Mammary epithelial cell (primary cell): ENCODE measurements at regions of chr14 and their contacts with region 1.

Region 1: DNA sequence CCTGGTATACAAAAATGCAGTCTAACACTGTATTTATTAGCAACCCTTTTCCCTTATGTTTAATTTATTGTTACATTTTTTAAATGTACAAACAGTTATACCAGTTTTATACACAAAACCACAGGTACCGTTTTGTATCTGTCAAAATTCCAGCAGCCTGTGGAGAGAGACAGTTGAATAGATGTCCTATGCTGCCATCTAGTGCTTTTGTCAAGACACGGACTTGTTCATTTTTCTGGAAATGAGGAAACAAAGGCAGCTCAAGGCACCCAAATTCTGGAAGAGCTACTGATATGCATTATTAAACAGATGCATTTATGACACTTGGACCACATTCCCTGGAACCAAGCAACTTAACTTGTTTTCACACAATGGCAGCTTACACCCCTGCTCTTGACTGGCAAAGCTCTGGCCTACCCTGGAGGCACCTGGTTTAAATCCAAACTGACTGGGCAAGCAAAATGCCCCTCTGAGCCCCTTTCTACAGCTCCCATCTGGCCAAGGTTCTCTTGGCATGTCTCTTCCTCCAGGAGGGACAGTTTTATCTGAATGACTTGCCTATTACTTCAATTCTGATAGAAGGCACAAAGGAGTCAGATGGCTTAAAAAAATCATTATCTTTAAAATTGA is 286.9 kb upstream of the PRKD1 start:
- DNase-seq: peak; percentile 55
- H3K4me3 ChIP-seq: no peak overlapping the region
- H3K27ac ChIP-seq: no peak overlapping the region
- H3K4me1 ChIP-seq: peaks cover 5% of the 10 kb centered on the region
- H3K27me3 ChIP-seq: no peaks in the 10 kb centered on the region
- CTCF ChIP-seq: peak; percentile 68 to 70

Region 2: GRCh38 chr14:29927376-29928116 is 287.0 kb before region 1 on chr14 and contains the start of gene PRKD1:
- CTCF ChIA-PET with region 1: no interaction called
- dilution Hi-C with region 1: no loop called
- in situ Hi-C with region 1: no loop called
- intact Hi-C with region 1: loop called (anchors 2 kb)
- DNase-seq: peak; percentile 37
- H3K4me3 ChIP-seq: peak within 1 kb of the TSS; percentile 48 to 53 (median 48)
- H3K27ac ChIP-seq: no peak within 1 kb of the TSS
- H3K4me1 ChIP-seq: peaks cover 5% of the 10 kb centered on the region
- H3K27me3 ChIP-seq: no peaks in the 10 kb centered on the region
- CTCF ChIP-seq: no peak
- total RNA-seq, gene PRKD1: 1.4 to 6.3 TPM

Region 3: GRCh38 chr14:30005114-30005808 is 209.3 kb before region 1 on chr14:
- CTCF ChIA-PET with region 1: no interaction called
- dilution Hi-C with region 1: no loop called
- in situ Hi-C with region 1: no loop called
- intact Hi-C with region 1: loop called (anchors 1 kb)
- DNase-seq: peak; percentile 21
- H3K4me3 ChIP-seq: no peak overlapping the region
- H3K27ac ChIP-seq: no peak overlapping the region
- H3K4me1 ChIP-seq: no peaks in the 10 kb centered on the region
- H3K27me3 ChIP-seq: no peaks in the 10 kb centered on the region
- CTCF ChIP-seq: peak; percentile 37 to 57

Region 4: GRCh38 chr14:30227876-30228275 is 13.3 kb after region 1 on chr14:
- CTCF ChIA-PET with region 1: no interaction called
- dilution Hi-C with region 1: no loop called
- in situ Hi-C with region 1: no loop called
- intact Hi-C with region 1: no loop called
- DNase-seq: peak; percentile 68
- H3K4me3 ChIP-seq: no peak overlapping the region
- H3K27ac ChIP-seq: no peak overlapping the region
- H3K4me1 ChIP-seq: peaks cover 24% of the 10 kb centered on the region
- H3K27me3 ChIP-seq: no peaks in the 10 kb centered on the region
- CTCF ChIP-seq: no peak

Region 5: GRCh38 chr14:30355431-30355913 is 140.9 kb after region 1 on chr14:
- CTCF ChIA-PET with region 1: no interaction called
- dilution Hi-C with region 1: no loop called
- in situ Hi-C with region 1: no loop called
- intact Hi-C with region 1: no loop called
- DNase-seq: no peak
- H3K4me3 ChIP-seq: no peak overlapping the region
- H3K27ac ChIP-seq: no peak overlapping the region
- H3K4me1 ChIP-seq: no peaks in the 10 kb centered on the region
- H3K27me3 ChIP-seq: peaks cover 1% of the 10 kb centered on the region
- CTCF ChIP-seq: no peak